A549 (cell line): ENCODE measurements at regions of chr7 and their contacts with region 1.

Region 1: GRCh38 chr7:123865517-123866117 is 20.6 kb downstream of the HYAL4 start:
- DNase-seq: peak; percentile 11 to 69
- ATAC-seq: peak; percentile 83 to 97; a peak in 4 of 6 replicates
- H3K4me3 ChIP-seq: no peak overlapping the region
- H3K27ac ChIP-seq: no peak overlapping the region
- H3K4me1 ChIP-seq: no peaks in the 10 kb centered on the region
- CTCF ChIP-seq: peak; percentile 86
- EP300 ChIP-seq: no peak
- POLR2A ChIP-seq: no peak
- RAD21 ChIP-seq: peak; percentile 73 to 74

Region 2: DNA sequence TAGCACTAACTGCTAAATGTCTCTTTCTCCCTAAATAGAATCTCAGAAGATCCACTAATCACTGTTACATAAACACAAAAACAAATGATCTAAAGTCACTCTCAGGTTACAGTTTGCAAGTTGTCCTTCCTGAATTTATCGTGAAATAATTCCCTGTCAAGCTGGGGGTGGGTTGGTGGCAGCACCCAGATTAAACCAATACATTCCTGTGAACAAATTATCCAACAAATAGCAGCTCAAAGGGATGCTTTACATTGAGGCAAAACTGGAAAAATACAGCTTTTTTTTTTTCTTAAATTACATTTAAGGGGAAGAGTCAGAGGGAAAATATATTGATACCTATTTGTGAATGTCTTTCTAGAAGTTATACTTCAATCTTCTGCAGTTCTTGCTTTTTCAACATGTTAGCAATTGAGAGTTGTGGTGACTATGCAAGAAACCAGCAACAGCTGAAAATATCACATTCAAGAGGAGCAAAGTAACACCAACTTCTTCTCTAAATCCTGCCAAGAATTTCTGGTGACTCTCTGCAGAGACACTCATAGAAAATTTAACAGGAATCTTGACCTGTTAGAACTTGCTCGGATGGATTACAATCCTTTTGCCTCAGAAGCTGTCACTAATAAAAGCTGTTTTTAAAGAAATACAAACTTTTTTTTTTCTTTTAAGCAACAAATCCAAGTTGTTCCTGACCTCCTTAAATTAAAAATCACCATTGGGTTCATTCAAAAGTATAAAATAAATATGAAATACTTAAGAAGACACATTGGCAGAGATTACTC is 191.0 kb before region 1 on chr7:
- CTCF ChIA-PET with region 1: interaction called, 10 read pairs
- POLR2A ChIA-PET with region 1: no interaction called
- DNase-seq: no peak
- ATAC-seq: no peak
- H3K4me3 ChIP-seq: no peak overlapping the region
- H3K27ac ChIP-seq: no peak overlapping the region
- H3K4me1 ChIP-seq: peaks cover 9% of the 10 kb centered on the region; the same call in 2 of the 3 replicates
- CTCF ChIP-seq: no peak
- EP300 ChIP-seq: no peak
- POLR2A ChIP-seq: no peak
- RAD21 ChIP-seq: no peak

Region 3: DNA sequence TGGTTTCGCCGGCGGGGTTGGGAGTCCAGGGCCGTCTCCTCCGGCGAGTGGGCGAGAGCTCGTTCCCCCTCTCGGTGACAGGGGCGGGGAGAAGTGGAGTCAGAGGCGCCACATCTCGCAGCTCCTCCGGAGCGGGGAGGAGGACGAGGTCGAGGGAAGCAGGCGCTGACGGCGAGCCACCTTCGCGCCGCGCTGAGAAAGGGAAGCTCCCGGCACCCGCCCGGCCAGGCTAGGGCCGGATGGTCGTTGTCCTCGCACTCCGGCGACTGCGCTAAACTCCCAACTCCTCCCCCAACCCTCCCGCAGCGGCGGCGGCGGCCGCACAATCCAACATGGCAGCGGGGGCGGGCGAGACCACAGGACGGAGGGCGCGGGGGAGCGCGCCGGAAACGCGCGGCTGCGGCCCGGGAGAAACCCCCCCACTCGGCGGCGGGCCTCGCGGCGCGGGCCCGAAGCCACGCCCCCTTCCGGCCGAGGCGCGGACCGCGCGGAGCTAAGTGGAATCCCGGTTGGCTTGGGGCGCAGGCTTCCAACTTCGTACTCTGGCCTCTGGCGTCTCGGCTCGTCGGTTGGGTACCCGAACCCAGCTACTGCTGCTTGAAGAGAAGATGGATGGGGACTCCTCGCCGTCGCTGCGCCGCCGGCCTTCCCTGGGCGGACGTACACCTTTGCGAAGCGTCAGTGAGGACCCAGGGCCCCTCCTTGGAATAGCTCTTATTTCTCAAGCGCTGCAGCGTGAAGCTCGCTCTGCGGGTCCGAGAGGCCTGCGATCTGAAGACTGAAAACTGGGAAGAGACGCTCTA is 116.7 kb before region 1 on chr7 and contains the start of gene WASL:
- CTCF ChIA-PET with region 1: interaction called, 16 read pairs
- POLR2A ChIA-PET with region 1: no interaction called
- DNase-seq: peak; percentile 73 to 94
- ATAC-seq: peak; percentile 80 to 88
- H3K4me3 ChIP-seq: peak within 1 kb of the TSS; percentile 97
- H3K27ac ChIP-seq: peak within 1 kb of the TSS; percentile 94 to 96
- H3K4me1 ChIP-seq: peaks cover 39% of the 10 kb centered on the region
- CTCF ChIP-seq: no peak
- EP300 ChIP-seq: no peak
- POLR2A ChIP-seq: peak; percentile 58
- RAD21 ChIP-seq: peak in 1 of 2 experiments; percentile 21; a peak in 1 of 5 replicates
- polyA plus RNA-seq, gene WASL: 18.5 and 21.2 TPM in 2 replicates

Region 4: DNA sequence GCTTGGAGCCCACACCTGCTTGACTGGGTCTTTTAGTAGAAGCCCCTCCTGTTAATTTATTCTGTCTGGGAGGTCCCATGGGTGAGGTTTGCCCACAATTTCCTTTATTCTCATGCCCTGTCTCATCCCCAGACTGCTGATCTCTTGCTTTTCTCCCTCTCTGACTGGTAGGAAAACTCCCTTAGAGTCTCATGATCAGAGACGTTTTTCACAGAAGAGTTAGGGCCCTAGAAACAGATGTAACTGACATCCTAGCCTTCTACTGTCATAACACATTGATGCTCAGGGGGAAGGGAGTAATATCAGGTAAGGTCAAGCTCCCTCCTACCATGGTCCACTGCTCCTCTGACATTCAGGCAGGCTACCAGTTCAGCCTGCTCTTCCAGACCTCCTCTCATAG is 73.1 kb before region 1 on chr7:
- CTCF ChIA-PET with region 1: interaction called, 75 read pairs
- POLR2A ChIA-PET with region 1: no interaction called
- DNase-seq: no peak
- ATAC-seq: no peak
- H3K4me3 ChIP-seq: no peak overlapping the region
- H3K27ac ChIP-seq: no peak overlapping the region
- H3K4me1 ChIP-seq: no peaks in the 10 kb centered on the region
- CTCF ChIP-seq: no peak
- EP300 ChIP-seq: no peak
- POLR2A ChIP-seq: no peak
- RAD21 ChIP-seq: no peak

Region 5: GRCh38 chr7:123805287-123805686 is 60.3 kb before region 1 on chr7:
- CTCF ChIA-PET with region 1: interaction called, 75 read pairs
- POLR2A ChIA-PET with region 1: no interaction called
- DNase-seq: no peak
- ATAC-seq: no peak
- H3K4me3 ChIP-seq: no peak overlapping the region
- H3K27ac ChIP-seq: no peak overlapping the region
- H3K4me1 ChIP-seq: no peaks in the 10 kb centered on the region
- CTCF ChIP-seq: no peak
- EP300 ChIP-seq: no peak
- POLR2A ChIP-seq: no peak
- RAD21 ChIP-seq: no peak